Mammary epithelial cell (primary cell): ENCODE measurements at regions of chr19 and their contacts with region 1.

Region 1: GRCh38 chr19:43809762-43810696 is 7.8 kb upstream of the LYPD5 start:
- DNase-seq: peak; percentile 60
- H3K4me3 ChIP-seq: no peak overlapping the region
- H3K27ac ChIP-seq: no peak overlapping the region
- H3K4me1 ChIP-seq: peaks cover 19% of the 10 kb centered on the region
- H3K27me3 ChIP-seq: no peaks in the 10 kb centered on the region
- CTCF ChIP-seq: peak; percentile 45 to 69

Region 2: GRCh38 chr19:43290568-43291359 is 519.3 kb before region 1 on chr19:
- CTCF ChIA-PET with region 1: no interaction called
- dilution Hi-C with region 1: loop called (anchors 10 kb)
- in situ Hi-C with region 1: no loop called
- intact Hi-C with region 1: no loop called
- DNase-seq: peak; percentile 20
- H3K4me3 ChIP-seq: no peak overlapping the region
- H3K27ac ChIP-seq: no peak overlapping the region
- H3K4me1 ChIP-seq: no peaks in the 10 kb centered on the region
- H3K27me3 ChIP-seq: no peaks in the 10 kb centered on the region
- CTCF ChIP-seq: no peak

Region 3: GRCh38 chr19:43555185-43555770 is 254.8 kb before region 1 on chr19:
- CTCF ChIA-PET with region 1: no interaction called
- dilution Hi-C with region 1: no loop called
- in situ Hi-C with region 1: no loop called
- intact Hi-C with region 1: loop called (anchors 5 kb)
- DNase-seq: peak; percentile 53
- H3K4me3 ChIP-seq: no peak overlapping the region
- H3K27ac ChIP-seq: no peak overlapping the region
- H3K4me1 ChIP-seq: no peaks in the 10 kb centered on the region
- H3K27me3 ChIP-seq: no peaks in the 10 kb centered on the region
- CTCF ChIP-seq: peak; percentile 84 to 95

Region 4: DNA sequence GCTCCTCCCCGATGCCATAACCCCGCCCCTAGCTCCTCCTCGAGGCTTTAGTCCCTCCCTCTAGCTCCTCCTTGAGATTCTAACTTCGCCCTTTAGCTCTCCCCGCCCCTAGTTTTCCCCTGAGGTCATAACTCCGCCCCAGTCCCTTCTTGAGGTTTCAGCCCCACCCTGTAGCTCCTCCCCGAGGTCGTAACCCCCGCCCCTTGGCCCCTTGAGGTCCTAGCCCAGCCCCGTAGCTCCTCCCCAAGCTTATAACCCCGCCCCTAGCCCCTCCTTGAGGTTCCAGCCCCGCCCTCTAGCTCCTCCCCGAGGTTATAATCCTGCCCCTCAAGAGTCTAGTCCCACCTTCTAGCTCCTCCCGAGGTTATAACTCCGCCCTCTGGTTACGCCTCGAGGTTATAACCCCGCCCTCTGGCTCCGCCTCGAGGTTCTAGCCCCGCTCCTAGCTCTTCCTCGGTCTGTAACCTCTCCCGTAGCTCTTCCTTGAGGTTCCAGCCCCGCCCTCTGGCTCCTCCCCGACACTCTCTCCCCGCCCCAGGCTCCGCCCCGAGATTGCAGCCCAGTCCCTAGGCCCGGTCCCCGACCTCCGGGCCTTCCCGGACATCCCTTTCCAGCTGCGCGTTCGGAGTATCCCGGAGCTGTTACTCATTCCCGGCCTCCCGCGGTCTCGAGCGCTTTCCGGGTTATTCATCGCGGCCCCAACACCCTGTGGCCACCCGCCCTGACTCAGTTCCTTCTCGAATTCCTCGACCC is 141.4 kb before region 1 on chr19:
- CTCF ChIA-PET with region 1: interaction called, 5 read pairs
- dilution Hi-C with region 1: no loop called
- in situ Hi-C with region 1: no loop called
- intact Hi-C with region 1: loop called (anchors 2 kb)
- DNase-seq: peak; percentile 99
- H3K4me3 ChIP-seq: peak overlapping the region; percentile 69 to 77 (median 70)
- H3K27ac ChIP-seq: peak overlapping the region; percentile 96
- H3K4me1 ChIP-seq: peaks cover 13% of the 10 kb centered on the region
- H3K27me3 ChIP-seq: no peaks in the 10 kb centered on the region
- CTCF ChIP-seq: no peak

Region 5: GRCh38 chr19:43743022-43743421 is 67.0 kb before region 1 on chr19:
- CTCF ChIA-PET with region 1: no interaction called
- dilution Hi-C with region 1: no loop called
- in situ Hi-C with region 1: no loop called
- intact Hi-C with region 1: loop called (anchors 1 kb)
- DNase-seq: no peak
- H3K4me3 ChIP-seq: no peak overlapping the region
- H3K27ac ChIP-seq: no peak overlapping the region
- H3K4me1 ChIP-seq: peaks cover 17% of the 10 kb centered on the region
- H3K27me3 ChIP-seq: no peaks in the 10 kb centered on the region
- CTCF ChIP-seq: no peak

Region 6: GRCh38 chr19:43765109-43765876 is 44.7 kb before region 1 on chr19:
- CTCF ChIA-PET with region 1: interaction called, 5 read pairs
- dilution Hi-C with region 1: no loop called
- in situ Hi-C with region 1: no loop called
- intact Hi-C with region 1: loop called (anchors 1 kb)
- DNase-seq: peak; percentile 98
- H3K4me3 ChIP-seq: no peak overlapping the region
- H3K27ac ChIP-seq: peak overlapping the region; percentile 82
- H3K4me1 ChIP-seq: peaks cover 74% of the 10 kb centered on the region
- H3K27me3 ChIP-seq: no peaks in the 10 kb centered on the region
- CTCF ChIP-seq: no peak

Region 7: DNA sequence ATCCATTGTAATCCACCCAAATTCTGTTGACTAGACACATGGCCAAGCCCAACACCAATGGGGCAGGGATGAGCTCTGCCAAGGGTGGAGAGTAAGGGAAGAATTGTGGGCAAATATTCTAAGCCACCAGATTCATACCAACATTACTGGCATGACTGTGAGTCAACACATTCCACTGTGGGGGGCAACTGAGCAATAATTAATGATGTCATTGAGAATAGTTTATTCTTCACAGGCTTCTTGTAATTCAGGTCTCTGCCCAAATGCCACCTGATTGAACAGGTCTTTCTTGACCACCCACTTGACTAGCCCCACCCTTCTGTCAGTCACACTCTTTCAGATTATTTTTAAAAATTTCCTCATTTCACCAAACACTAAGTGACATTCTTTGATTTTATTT is 45.6 kb after region 1 on chr19:
- CTCF ChIA-PET with region 1: no interaction called
- dilution Hi-C with region 1: no loop called
- in situ Hi-C with region 1: no loop called
- intact Hi-C with region 1: no loop called
- DNase-seq: no peak
- H3K4me3 ChIP-seq: no peak overlapping the region
- H3K27ac ChIP-seq: no peak overlapping the region
- H3K4me1 ChIP-seq: no peaks in the 10 kb centered on the region
- H3K27me3 ChIP-seq: no peaks in the 10 kb centered on the region
- CTCF ChIP-seq: no peak